ENCODE measurements at regions of chr3 and their contacts with region 1.

Region 1: GRCh38 chr3:115099986-115100571 is 47.0 kb downstream of the ZBTB20 start:
- DNase-seq: no peak
- ATAC-seq: peak; percentile 85

Region 2: DNA sequence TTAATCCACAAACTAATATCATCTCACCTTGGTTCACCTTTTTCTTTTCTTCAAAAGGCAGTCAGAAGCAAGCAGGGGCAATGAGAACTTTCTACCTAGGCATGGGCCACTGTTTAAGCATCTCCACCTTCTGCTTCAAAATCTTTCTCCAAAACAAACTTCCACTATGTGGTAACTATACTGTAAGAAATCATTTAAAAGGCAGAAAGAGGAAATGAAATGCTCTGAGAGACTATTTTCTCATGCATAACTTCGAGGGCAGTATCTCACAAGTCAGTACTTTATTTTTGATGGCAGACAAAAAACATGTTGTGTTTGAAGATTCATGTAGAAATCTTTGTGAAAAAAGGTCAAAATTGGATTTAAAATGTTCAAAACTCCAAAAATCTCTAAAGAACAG is 372.7 kb before region 1 on chr3:
- intact Hi-C with region 1: no loop called
- DNase-seq: no peak
- ATAC-seq: no peak

Region 3: GRCh38 chr3:114827495-114827894 is 272.6 kb before region 1 on chr3:
- intact Hi-C with region 1: loop called (anchors 5 kb)
- DNase-seq: no peak
- ATAC-seq: peak; percentile 84

Region 4: GRCh38 chr3:116129230-116129946 is 1029.3 kb after region 1 on chr3:
- intact Hi-C with region 1: no loop called
- DNase-seq: no peak
- ATAC-seq: no peak